ENCODE measurements at regions of chr3 and their contacts with region 1.

Region 1: DNA sequence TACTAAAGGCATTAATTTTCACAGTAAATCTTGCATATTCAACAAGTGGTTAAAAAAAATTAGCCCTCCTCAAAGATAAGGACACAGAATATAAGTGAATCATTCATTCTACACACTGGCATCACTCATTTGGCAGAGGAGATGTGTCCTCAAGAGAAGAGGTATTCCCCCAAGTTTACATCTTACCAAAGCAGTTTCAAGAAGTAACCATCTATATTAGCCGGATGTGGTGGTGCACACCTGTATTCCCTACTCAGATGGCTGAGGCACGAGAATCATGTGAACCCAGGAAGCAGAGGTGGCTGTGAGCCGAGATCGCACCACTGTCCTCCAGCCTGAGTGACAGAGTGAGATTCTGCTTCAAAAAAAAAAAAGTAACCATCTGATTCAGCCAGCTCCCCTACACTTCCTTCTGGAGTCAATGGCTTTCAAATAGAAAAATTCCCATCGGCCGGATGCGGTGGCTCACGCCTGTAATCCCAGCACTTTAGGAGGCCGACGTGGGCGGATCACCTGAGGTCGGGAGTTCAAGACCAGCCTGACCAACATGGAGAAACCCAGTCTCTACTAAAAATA is 15.4 kb downstream of the RAF1 start:
- DNase-seq: no peak
- H3K4me3 ChIP-seq: no peak overlapping the region
- H3K27ac ChIP-seq: no peak overlapping the region
- H3K4me1 ChIP-seq: peaks cover 32 to 59% of the 10 kb centered on the region in 2 donors
- H3K27me3 ChIP-seq: no peaks in the 10 kb centered on the region
- CTCF ChIP-seq: no peak
- POLR2A ChIP-seq: no peak

Region 2: GRCh38 chr3:12027184-12027846 is 621.2 kb before region 1 on chr3:
- intact Hi-C with region 1: no loop called
- DNase-seq: no peak
- H3K4me3 ChIP-seq: no peak overlapping the region
- H3K27ac ChIP-seq: no peak overlapping the region
- H3K4me1 ChIP-seq: no peaks in the 10 kb centered on the region
- H3K27me3 ChIP-seq: no peaks in the 10 kb centered on the region
- CTCF ChIP-seq: no peak
- POLR2A ChIP-seq: no peak

Region 3: GRCh38 chr3:12440927-12441326 is 207.5 kb before region 1 on chr3:
- intact Hi-C with region 1: no loop called
- DNase-seq: peak; percentile 9 to 10
- H3K4me3 ChIP-seq: no peak overlapping the region
- H3K27ac ChIP-seq: no peak overlapping the region
- H3K4me1 ChIP-seq: peaks cover 0 to 6% of the 10 kb centered on the region in 2 donors
- H3K27me3 ChIP-seq: no peaks in the 10 kb centered on the region
- CTCF ChIP-seq: no peak
- POLR2A ChIP-seq: no peak

Region 4: GRCh38 chr3:12560505-12561190 is 87.8 kb before region 1 on chr3:
- intact Hi-C with region 1: loop called (anchors 10 kb)
- DNase-seq: no peak
- H3K4me3 ChIP-seq: no peak overlapping the region
- H3K27ac ChIP-seq: peak overlapping the region in 2 of 3 donors; percentile 1 to 20
- H3K4me1 ChIP-seq: peaks cover 46 to 59% of the 10 kb centered on the region in 2 donors
- H3K27me3 ChIP-seq: no peaks in the 10 kb centered on the region
- CTCF ChIP-seq: no peak
- POLR2A ChIP-seq: no peak